Natural killer cell (primary cell): ENCODE measurements at regions of chr6 and their contacts with region 1.

Region 1: DNA sequence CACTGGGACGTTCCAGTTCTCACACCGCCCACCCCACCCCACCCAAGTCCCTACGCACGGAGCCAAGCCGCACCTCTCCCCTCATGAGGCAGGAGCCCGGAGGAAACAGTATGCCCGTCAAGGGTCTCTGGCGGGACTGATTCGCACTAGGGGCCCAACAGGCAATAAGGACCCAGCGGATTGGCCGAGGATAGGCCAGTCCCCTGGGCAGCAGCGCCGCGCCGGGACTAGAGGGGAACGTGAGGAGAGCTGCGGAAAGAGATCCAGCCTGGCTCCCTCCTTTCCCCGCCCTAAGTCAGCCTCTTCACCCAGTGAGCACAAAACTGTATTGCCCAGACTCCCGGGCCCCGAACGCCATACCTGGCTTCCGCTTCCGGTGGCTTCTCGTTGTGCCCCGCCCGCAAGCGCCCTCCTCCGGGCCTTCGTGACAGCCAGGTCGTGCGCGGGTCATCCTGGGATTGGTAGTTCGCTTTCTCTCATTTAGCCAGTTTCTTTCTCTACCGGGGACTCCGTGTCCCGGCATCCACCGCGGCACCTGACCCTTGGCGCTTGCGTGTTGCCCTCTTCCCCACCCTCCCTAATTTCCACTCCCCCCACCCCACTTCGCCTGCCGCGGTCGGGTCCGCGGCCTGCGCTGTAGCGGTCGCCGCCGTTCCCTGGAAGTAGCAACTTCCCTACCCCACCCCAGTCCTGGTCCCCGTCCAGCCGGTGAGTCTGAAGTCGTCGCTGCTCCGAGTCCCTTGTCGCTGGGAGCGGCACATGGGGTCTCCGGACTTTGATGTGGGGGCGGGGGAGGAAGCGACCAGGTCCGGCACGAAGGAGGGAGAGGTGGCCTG is at the start of gene CSNK2B:
- DNase-seq: peak; percentile 95 to 99
- ATAC-seq: peak; percentile 88 to 97 (median 91)
- H3K4me3 ChIP-seq: peak within 1 kb of the TSS; percentile 67
- H3K4me3 Mint-ChIP-seq: peak within 1 kb of the TSS; percentile 96
- H3K27ac ChIP-seq: peak within 1 kb of the TSS; percentile 92
- H3K27ac Mint-ChIP-seq: peak within 1 kb of the TSS; percentile 97 to 100
- H3K4me1 ChIP-seq: peaks cover 43% of the 10 kb centered on the region
- H3K4me1 Mint-ChIP-seq: peaks cover 32 to 53% of the 10 kb centered on the region in 2 donors
- H3K27me3 ChIP-seq: no peaks in the 10 kb centered on the region
- H3K27me3 Mint-ChIP-seq: no peaks in the 10 kb centered on the region
- CTCF ChIP-seq: no peak
- total RNA-seq, gene CSNK2B: 140 to 157 (median 141) TPM

Region 2: DNA sequence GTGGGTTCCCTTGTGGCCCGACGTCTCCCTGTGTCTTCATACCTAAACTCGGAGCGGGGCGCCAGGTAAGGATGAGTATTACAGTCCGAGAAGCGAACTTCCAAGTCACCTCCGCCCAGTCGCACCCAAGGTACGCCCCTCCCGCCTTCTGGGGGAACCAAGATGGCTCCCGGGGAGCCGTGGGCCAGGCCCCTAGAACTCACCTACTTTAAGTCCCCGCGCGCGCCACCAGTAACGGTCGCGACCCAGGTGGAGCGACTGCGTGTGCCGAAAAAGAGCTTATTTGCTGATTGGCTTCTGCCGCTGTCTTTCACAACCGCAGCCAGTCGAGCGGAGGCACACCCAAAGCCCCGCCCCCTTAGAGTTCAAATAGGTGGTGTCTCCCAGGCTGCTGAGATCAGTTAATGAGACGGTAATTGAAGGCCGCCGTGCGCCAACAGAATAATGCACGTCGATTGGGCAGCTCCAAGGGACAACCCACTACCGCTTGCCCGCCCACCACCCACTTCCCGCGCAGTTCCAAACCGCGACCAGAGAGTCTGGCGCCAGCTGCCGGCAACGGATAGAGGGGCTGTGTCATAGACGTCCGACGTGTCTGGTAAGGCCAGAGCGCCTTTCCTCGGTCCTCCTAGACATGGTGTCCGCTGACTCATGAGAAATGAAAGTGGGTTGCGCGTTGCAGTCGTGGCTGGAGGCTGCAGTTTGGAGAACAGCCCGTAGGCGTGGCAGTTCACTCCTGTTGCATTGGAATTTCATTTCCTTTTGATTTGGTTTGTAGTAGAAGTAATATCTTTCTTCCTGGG is 948.5 kb before region 1 on chr6 and contains the start of gene MDC1:
- intact Hi-C with region 1: loop called (anchors 5 kb)
- DNase-seq: peak; percentile 97 to 100
- ATAC-seq: peak; percentile 72 to 88 (median 77)
- H3K4me3 ChIP-seq: peak within 1 kb of the TSS; percentile 68
- H3K4me3 Mint-ChIP-seq: peak within 1 kb of the TSS; percentile 98
- H3K27ac ChIP-seq: peak within 1 kb of the TSS; percentile 95
- H3K27ac Mint-ChIP-seq: peak within 1 kb of the TSS; percentile 97 to 100
- H3K4me1 ChIP-seq: peaks cover 39% of the 10 kb centered on the region
- H3K4me1 Mint-ChIP-seq: peaks cover 60 to 62% of the 10 kb centered on the region in 2 donors
- H3K27me3 ChIP-seq: no peaks in the 10 kb centered on the region
- H3K27me3 Mint-ChIP-seq: no peaks in the 10 kb centered on the region
- CTCF ChIP-seq: no peak
- total RNA-seq, gene MDC1: 61.2 to 77.0 (median 64.5) TPM

Region 3: GRCh38 chr6:31559958-31560696 is 105.6 kb before region 1 on chr6:
- intact Hi-C with region 1: loop called (anchors 5 kb)
- DNase-seq: peak; percentile 66 to 75
- ATAC-seq: peak; percentile 74 to 84 (median 76)
- H3K4me3 ChIP-seq: peak overlapping the region; percentile 0
- H3K4me3 Mint-ChIP-seq: peak overlapping the region; percentile 82
- H3K27ac ChIP-seq: peak overlapping the region; percentile 90
- H3K27ac Mint-ChIP-seq: peak overlapping the region; percentile 98
- H3K4me1 ChIP-seq: peaks cover 69% of the 10 kb centered on the region
- H3K4me1 Mint-ChIP-seq: peaks cover 47 to 66% of the 10 kb centered on the region in 2 donors
- H3K27me3 ChIP-seq: no peaks in the 10 kb centered on the region
- H3K27me3 Mint-ChIP-seq: no peaks in the 10 kb centered on the region
- CTCF ChIP-seq: no peak

Region 4: DNA sequence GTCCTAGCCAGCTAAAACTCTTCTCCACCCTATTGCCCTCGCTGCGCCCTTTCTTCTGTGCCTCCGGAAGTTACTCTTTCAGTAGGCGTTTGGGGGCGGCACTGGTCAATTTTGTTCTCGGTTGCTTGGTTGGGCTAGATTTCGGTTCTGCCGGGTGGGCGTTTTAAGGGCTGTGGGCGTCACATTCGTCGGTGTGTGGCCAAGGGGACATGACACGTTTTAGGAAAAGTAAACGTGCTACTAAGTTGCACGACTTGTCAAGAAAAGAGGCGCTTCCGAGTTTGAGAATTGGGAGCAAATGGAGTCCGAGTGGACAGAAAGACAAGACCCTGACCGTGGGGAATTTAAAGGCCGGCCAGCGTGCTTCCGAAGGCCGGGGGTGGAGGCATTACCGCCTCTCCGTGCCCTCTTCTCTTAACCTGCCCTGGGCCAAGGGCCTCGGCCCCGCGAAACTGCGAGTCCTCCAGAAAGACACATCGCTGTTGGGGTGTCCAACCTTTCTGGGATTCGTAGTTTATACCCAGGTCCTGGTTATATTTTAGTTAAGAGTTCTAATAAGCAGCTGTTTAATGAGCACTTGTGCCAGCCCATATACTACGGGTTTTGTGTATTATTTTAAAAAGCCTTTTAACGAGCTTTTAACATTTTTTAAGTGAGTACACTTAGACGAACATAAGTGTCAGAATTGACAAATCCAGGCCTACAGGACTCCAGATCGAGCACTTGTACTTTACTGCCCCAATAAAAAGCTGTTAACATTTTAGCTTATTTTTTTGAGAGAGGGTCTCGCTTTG is 12.6 kb before region 1 on chr6:
- intact Hi-C with region 1: loop called (anchors 1 kb)
- DNase-seq: no peak
- ATAC-seq: peak; percentile 72 to 84 (median 73)
- H3K4me3 ChIP-seq: peak overlapping the region; percentile 90
- H3K4me3 Mint-ChIP-seq: peak overlapping the region; percentile 95
- H3K27ac ChIP-seq: peak overlapping the region; percentile 99
- H3K27ac Mint-ChIP-seq: peak overlapping the region; percentile 95 to 96
- H3K4me1 ChIP-seq: peaks cover 32% of the 10 kb centered on the region
- H3K4me1 Mint-ChIP-seq: peaks cover 49 to 60% of the 10 kb centered on the region in 2 donors
- H3K27me3 ChIP-seq: no peaks in the 10 kb centered on the region
- H3K27me3 Mint-ChIP-seq: no peaks in the 10 kb centered on the region
- CTCF ChIP-seq: no peak

Region 5: GRCh38 chr6:31739639-31740396 is 74.1 kb after region 1 on chr6 and contains the start of gene MSH5:
- intact Hi-C with region 1: loop called (anchors 2 kb)
- DNase-seq: peak; percentile 95 to 97
- ATAC-seq: peak; percentile 74 to 95 (median 89)
- H3K4me3 ChIP-seq: peak within 1 kb of the TSS; percentile 66
- H3K4me3 Mint-ChIP-seq: peak within 1 kb of the TSS; percentile 97
- H3K27ac ChIP-seq: peak within 1 kb of the TSS; percentile 83
- H3K27ac Mint-ChIP-seq: peak within 1 kb of the TSS; percentile 91 to 99
- H3K4me1 ChIP-seq: peaks cover 44% of the 10 kb centered on the region
- H3K4me1 Mint-ChIP-seq: peaks cover 60 to 71% of the 10 kb centered on the region in 2 donors
- H3K27me3 ChIP-seq: no peaks in the 10 kb centered on the region
- H3K27me3 Mint-ChIP-seq: no peaks in the 10 kb centered on the region
- CTCF ChIP-seq: no peak
- total RNA-seq, gene MSH5: 28.2 to 44.6 (median 43.7) TPM

Region 6: GRCh38 chr6:31776989-31777666 is 111.4 kb after region 1 on chr6 and contains the start of gene VWA7:
- intact Hi-C with region 1: no loop called
- DNase-seq: peak; percentile 49 to 77
- ATAC-seq: peak; percentile 72 to 89 (median 82)
- H3K4me3 ChIP-seq: no peak within 1 kb of the TSS
- H3K4me3 Mint-ChIP-seq: peak within 1 kb of the TSS; percentile 50
- H3K27ac ChIP-seq: peak within 1 kb of the TSS; percentile 55
- H3K27ac Mint-ChIP-seq: peak within 1 kb of the TSS; percentile 60 to 87
- H3K4me1 ChIP-seq: peaks cover 42% of the 10 kb centered on the region
- H3K4me1 Mint-ChIP-seq: peaks cover 0 to 33% of the 10 kb centered on the region in 2 donors
- H3K27me3 ChIP-seq: no peaks in the 10 kb centered on the region
- H3K27me3 Mint-ChIP-seq: no peaks in the 10 kb centered on the region
- CTCF ChIP-seq: no peak
- total RNA-seq, gene VWA7: 2.4 to 4.7 (median 3.2) TPM

Region 7: GRCh38 chr6:32177788-32178546 is 512.2 kb after region 1 on chr6 and contains the start of gene RNF5:
- intact Hi-C with region 1: loop called (anchors 10 kb)
- DNase-seq: peak; percentile 78 to 99
- ATAC-seq: peak; percentile 81 to 93 (median 83)
- H3K4me3 ChIP-seq: peak within 1 kb of the TSS; percentile 75
- H3K4me3 Mint-ChIP-seq: peak within 1 kb of the TSS; percentile 97
- H3K27ac ChIP-seq: peak within 1 kb of the TSS; percentile 97
- H3K27ac Mint-ChIP-seq: peak within 1 kb of the TSS; percentile 97
- H3K4me1 ChIP-seq: peaks cover 43% of the 10 kb centered on the region
- H3K4me1 Mint-ChIP-seq: peaks cover 68 to 86% of the 10 kb centered on the region in 2 donors
- H3K27me3 ChIP-seq: no peaks in the 10 kb centered on the region
- H3K27me3 Mint-ChIP-seq: no peaks in the 10 kb centered on the region
- CTCF ChIP-seq: no peak
- total RNA-seq, gene RNF5: 35.1 to 39.2 (median 36.6) TPM